Activated naive CD4-positive, alpha-beta T cell treated with anti-CD3 and anti-CD28 coated beads for 36 hours (primary cell): ENCODE measurements at regions of chr2 and their contacts with region 1.

Region 1: GRCh38 chr2:60881047-60881932 is at the start of gene REL:
- DNase-seq: peak; percentile 94
- H3K4me3 Mint-ChIP-seq: peak within 1 kb of the TSS; percentile 100
- H3K27ac Mint-ChIP-seq: peak within 1 kb of the TSS; percentile 98
- H3K4me1 Mint-ChIP-seq: peaks cover 21% of the 10 kb centered on the region
- H3K27me3 Mint-ChIP-seq: no peaks in the 10 kb centered on the region
- total RNA-seq, gene REL: 40.3 to 40.5 TPM

Region 2: GRCh38 chr2:60818272-60818671 is 63.0 kb before region 1 on chr2:
- CTCF ChIA-PET with region 1: interaction called, 22 read pairs
- intact Hi-C with region 1: loop called (anchors 1 kb)
- DNase-seq: peak; percentile 80
- H3K4me3 Mint-ChIP-seq: no peak overlapping the region
- H3K27ac Mint-ChIP-seq: peak overlapping the region; percentile 89
- H3K4me1 Mint-ChIP-seq: peaks cover 52% of the 10 kb centered on the region
- H3K27me3 Mint-ChIP-seq: no peaks in the 10 kb centered on the region

Region 3: DNA sequence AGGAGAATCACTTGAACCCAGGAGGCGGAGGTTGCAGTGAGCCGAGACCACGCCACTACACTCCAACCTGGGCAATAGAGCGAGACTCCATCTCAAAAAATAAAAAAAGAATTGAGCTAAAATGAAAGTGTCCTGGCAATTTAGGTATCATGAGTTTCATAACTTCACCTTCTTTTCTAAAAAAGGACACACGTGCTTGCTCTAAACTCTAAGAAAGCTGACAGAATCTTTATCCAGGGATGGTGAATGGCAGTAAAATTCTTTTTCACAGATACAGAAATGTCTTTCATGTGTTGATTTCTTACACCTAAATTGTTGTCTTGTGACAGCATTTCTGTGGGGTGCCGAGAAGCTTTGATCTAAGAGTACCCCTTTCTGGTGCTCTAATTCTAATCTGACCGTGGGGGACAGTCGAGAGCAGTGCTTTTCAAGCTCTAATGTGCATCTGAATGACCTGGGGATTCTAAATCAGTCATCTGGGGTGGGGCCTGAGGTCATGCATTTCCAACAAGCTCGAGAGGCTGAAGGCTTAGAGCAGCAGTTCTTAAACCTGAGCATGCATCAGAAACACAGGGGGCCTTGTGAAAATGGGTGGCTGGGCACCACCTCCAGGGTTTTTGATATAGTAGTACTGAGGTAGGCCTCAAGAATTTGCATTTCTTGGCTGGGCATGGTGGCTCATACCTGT is 42.0 kb before region 1 on chr2:
- CTCF ChIA-PET with region 1: interaction called, 3 read pairs
- intact Hi-C with region 1: loop called (anchors 1 kb)
- DNase-seq: no peak
- H3K4me3 Mint-ChIP-seq: no peak overlapping the region
- H3K27ac Mint-ChIP-seq: no peak overlapping the region
- H3K4me1 Mint-ChIP-seq: peaks cover 32% of the 10 kb centered on the region
- H3K27me3 Mint-ChIP-seq: no peaks in the 10 kb centered on the region

Region 4: GRCh38 chr2:60867007-60867406 is 14.3 kb before region 1 on chr2:
- CTCF ChIA-PET with region 1: no interaction called
- intact Hi-C with region 1: no loop called
- DNase-seq: no peak
- H3K4me3 Mint-ChIP-seq: no peak overlapping the region
- H3K27ac Mint-ChIP-seq: no peak overlapping the region
- H3K4me1 Mint-ChIP-seq: peaks cover 30% of the 10 kb centered on the region
- H3K27me3 Mint-ChIP-seq: no peaks in the 10 kb centered on the region

Region 5: DNA sequence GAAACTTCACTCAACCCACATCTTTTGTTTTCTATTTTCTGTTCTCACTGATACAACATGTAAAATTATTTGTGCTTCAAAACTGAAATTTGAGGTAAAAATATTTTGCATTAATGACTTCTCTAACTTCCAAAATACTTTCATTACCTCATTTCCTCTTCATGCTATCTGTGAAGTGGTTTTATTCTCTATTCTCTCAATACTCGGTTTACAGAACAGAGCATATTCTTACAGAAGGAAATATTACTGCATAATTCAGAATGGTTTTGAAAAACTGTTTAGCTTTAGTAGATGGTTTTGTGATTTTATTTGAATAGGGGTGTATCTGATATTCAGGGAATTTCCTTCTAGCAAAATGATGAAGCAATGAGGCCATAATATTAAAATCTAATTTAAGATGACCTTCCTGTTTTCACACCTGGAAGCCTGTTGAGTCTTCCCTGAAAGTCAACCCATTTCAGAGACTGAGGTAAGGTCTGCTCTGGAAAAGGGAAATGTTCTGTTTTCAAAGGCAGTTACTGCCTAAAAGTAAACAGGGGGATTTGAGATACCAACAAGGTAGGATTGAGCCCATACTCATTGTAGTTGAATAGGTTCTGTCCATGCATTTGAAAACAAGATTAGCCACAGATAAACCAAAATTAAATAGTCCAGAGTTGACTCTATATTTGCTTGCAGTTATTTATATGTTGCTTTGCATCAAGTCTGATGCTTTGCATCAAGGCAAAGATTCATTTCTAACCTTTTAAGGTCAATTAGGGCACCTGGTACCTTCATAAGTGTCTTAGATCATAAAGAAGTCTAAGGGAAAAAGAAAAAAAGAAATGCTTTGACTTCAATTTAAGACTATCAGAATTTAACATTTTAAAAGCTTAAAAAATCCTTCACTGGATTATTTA is 85.5 kb after region 1 on chr2:
- CTCF ChIA-PET with region 1: interaction called, 4 read pairs
- intact Hi-C with region 1: loop called (anchors 1 kb)
- DNase-seq: no peak
- H3K4me3 Mint-ChIP-seq: peak overlapping the region; percentile 11
- H3K27ac Mint-ChIP-seq: peak overlapping the region; percentile 62
- H3K4me1 Mint-ChIP-seq: peaks cover 62% of the 10 kb centered on the region
- H3K27me3 Mint-ChIP-seq: no peaks in the 10 kb centered on the region

Region 6: GRCh38 chr2:60998628-60999545 is 117.6 kb after region 1 on chr2:
- CTCF ChIA-PET with region 1: interaction called, 9 read pairs
- intact Hi-C with region 1: loop called (anchors 1 kb)
- DNase-seq: no peak
- H3K4me3 Mint-ChIP-seq: no peak overlapping the region
- H3K27ac Mint-ChIP-seq: no peak overlapping the region
- H3K4me1 Mint-ChIP-seq: no peaks in the 10 kb centered on the region
- H3K27me3 Mint-ChIP-seq: no peaks in the 10 kb centered on the region

Region 7: DNA sequence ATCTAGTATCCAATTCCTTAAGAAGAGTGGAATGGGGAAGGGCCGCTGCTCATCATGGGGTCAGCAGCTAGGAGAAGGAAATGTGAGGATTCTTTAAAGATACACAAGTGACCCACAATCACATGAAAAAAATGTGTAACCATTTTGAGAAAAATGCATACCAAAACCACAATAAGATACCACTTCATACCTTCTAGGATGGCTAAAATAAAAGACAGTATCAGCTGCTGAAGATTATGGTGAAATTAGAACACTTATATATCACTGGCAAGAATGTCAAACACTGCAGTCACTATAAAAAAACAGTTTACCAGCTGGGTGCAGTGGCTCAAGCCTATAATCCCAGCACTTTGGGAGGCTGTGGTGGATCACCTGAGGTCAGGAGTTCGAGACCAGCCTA is 348.6 kb after region 1 on chr2:
- CTCF ChIA-PET with region 1: no interaction called
- intact Hi-C with region 1: no loop called
- DNase-seq: no peak
- H3K4me3 Mint-ChIP-seq: no peak overlapping the region
- H3K27ac Mint-ChIP-seq: no peak overlapping the region
- H3K4me1 Mint-ChIP-seq: no peaks in the 10 kb centered on the region
- H3K27me3 Mint-ChIP-seq: no peaks in the 10 kb centered on the region

Region 8: DNA sequence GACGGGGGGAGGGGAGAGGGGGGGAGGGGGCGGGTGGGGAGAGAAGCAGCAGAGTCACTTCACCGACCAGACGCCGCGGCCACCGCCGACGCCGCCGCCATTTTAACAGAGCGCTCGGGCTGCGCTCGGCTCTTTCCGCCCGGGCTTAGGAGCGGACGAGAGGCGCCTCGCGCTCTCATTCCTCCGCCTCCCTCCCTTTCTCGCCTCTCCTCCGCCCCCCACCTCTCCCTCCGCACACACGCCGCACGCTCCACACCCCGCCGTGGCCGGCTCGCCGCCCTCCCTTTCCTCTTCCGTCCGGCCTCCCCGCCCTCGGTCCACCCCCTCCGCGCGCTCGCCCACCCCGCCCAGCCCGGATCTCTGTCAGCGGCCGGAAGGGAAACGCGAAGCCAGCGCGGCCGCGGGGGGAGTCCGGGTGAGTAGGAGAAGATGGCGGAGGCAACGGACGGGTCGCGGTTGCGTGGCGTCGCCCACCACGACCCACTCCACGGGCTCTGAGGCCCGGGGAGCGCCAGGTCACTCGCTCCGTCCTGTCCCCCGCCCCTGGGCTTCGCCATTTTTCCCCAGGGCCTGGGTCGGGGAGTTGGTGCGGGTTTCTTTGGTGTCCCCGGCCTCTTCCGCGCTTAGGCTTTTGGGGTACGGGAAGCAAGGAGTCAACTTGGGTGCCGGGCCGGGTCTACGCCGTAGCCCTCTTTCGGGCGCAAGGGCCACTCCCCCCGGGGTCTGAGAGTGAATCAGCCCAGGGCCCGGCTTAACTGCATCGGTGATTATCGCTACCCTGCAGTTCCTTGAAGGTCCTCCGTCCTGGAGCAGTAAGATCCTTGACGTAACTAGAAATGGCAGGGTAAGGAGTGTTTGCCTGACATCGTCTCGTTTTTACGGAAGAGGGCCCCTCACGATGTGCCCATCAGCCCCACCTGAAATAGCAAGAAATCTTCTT is 589.9 kb after region 1 on chr2 and contains the start of gene USP34:
- CTCF ChIA-PET with region 1: no interaction called
- intact Hi-C with region 1: loop called (anchors 5 kb)
- DNase-seq: peak; percentile 94
- H3K4me3 Mint-ChIP-seq: peak within 1 kb of the TSS; percentile 98
- H3K27ac Mint-ChIP-seq: peak within 1 kb of the TSS; percentile 97
- H3K4me1 Mint-ChIP-seq: peaks cover 31% of the 10 kb centered on the region
- H3K27me3 Mint-ChIP-seq: no peaks in the 10 kb centered on the region
- total RNA-seq, gene USP34: 59.5 to 60.4 TPM

Region 9: GRCh38 chr2:62195421-62196277 is 1314.4 kb after region 1 on chr2 and contains the start of gene B3GNT2:
- CTCF ChIA-PET with region 1: no interaction called
- intact Hi-C with region 1: loop called (anchors 2 kb)
- DNase-seq: peak; percentile 85
- H3K4me3 Mint-ChIP-seq: peak within 1 kb of the TSS; percentile 88
- H3K27ac Mint-ChIP-seq: peak within 1 kb of the TSS; percentile 91
- H3K4me1 Mint-ChIP-seq: peaks cover 22% of the 10 kb centered on the region
- H3K27me3 Mint-ChIP-seq: peaks cover 2% of the 10 kb centered on the region
- total RNA-seq, gene B3GNT2: 31.2 to 33.0 TPM